A549 (cell line): ENCODE measurements at regions of chr19 and their contacts with region 1.

Region 1: GRCh38 chr19:49869441-49870176 is 2.2 kb upstream of the PNKP start:
- DNase-seq: peak; percentile 99 to 100
- ATAC-seq: peak; percentile 68 to 82
- H3K4me3 ChIP-seq: peak overlapping the region; percentile 46
- H3K27ac ChIP-seq: peak overlapping the region; percentile 93 to 94
- H3K4me1 ChIP-seq: peaks cover 37% of the 10 kb centered on the region
- CTCF ChIP-seq: no peak
- EP300 ChIP-seq: no peak
- POLR2A ChIP-seq: peak; percentile 63
- RAD21 ChIP-seq: no peak

Region 2: GRCh38 chr19:49850473-49851342 is 18.9 kb before region 1 on chr19 and contains the start of gene PTOV1:
- CTCF ChIA-PET with region 1: interaction called, 13 read pairs
- POLR2A ChIA-PET with region 1: interaction called, 18 read pairs
- DNase-seq: peak; percentile 96 to 97
- ATAC-seq: peak; percentile 76 to 84
- H3K4me3 ChIP-seq: peak within 1 kb of the TSS; percentile 89
- H3K27ac ChIP-seq: peak within 1 kb of the TSS; percentile 94 to 97
- H3K4me1 ChIP-seq: peaks cover 17% of the 10 kb centered on the region
- CTCF ChIP-seq: no peak
- EP300 ChIP-seq: no peak
- POLR2A ChIP-seq: peak; percentile 44
- RAD21 ChIP-seq: no peak; a peak in 1 of 5 replicates
- polyA plus RNA-seq, gene PTOV1: 27.7 and 41.2 TPM in 2 replicates

Region 3: GRCh38 chr19:49855676-49856573 is 13.7 kb before region 1 on chr19:
- CTCF ChIA-PET with region 1: interaction called, 13 read pairs
- POLR2A ChIA-PET with region 1: interaction called, 18 read pairs
- DNase-seq: no peak
- ATAC-seq: peak; percentile 2 to 10; a peak in 4 of 6 replicates
- H3K4me3 ChIP-seq: no peak overlapping the region
- H3K27ac ChIP-seq: no peak overlapping the region
- H3K4me1 ChIP-seq: peaks cover 38% of the 10 kb centered on the region
- CTCF ChIP-seq: no peak
- EP300 ChIP-seq: no peak
- POLR2A ChIP-seq: peak; percentile 5; the same call in 1 of the 2 replicates
- RAD21 ChIP-seq: no peak

Region 4: GRCh38 chr19:49954079-49954829 is 84.6 kb after region 1 on chr19:
- CTCF ChIA-PET with region 1: no interaction called
- POLR2A ChIA-PET with region 1: no interaction called
- DNase-seq: no peak
- ATAC-seq: no peak
- H3K4me3 ChIP-seq: no peak overlapping the region
- H3K27ac ChIP-seq: no peak overlapping the region
- H3K4me1 ChIP-seq: no peaks in the 10 kb centered on the region
- CTCF ChIP-seq: no peak
- EP300 ChIP-seq: no peak
- POLR2A ChIP-seq: no peak
- RAD21 ChIP-seq: no peak